ENCODE measurements at regions of chr1 and their contacts with region 1.

Region 1: GRCh38 chr1:201792534-201793305 is 36.2 kb upstream of the IPO9 start:
- DNase-seq: peak; percentile 86
- H3K4me3 ChIP-seq: no peak overlapping the region
- H3K27ac ChIP-seq: peak overlapping the region; percentile 76
- H3K4me1 ChIP-seq: peaks cover 51% of the 10 kb centered on the region
- H3K27me3 ChIP-seq: no peaks in the 10 kb centered on the region
- CTCF ChIP-seq: peak; percentile 90 to 97
- POLR2A ChIP-seq: peak; percentile 54

Region 2: GRCh38 chr1:201530741-201531531 is 261.8 kb before region 1 on chr1:
- CTCF ChIA-PET with region 1: interaction called, 27 read pairs
- POLR2A ChIA-PET with region 1: no interaction called
- dilution Hi-C with region 1: no loop called
- intact Hi-C with region 1: loop called (anchors 1 kb)
- DNase-seq: peak; percentile 77
- H3K4me3 ChIP-seq: no peak overlapping the region
- H3K27ac ChIP-seq: no peak overlapping the region
- H3K4me1 ChIP-seq: peaks cover 12% of the 10 kb centered on the region
- H3K27me3 ChIP-seq: no peaks in the 10 kb centered on the region
- CTCF ChIP-seq: peak; percentile 87 to 89
- POLR2A ChIP-seq: no peak

Region 3: DNA sequence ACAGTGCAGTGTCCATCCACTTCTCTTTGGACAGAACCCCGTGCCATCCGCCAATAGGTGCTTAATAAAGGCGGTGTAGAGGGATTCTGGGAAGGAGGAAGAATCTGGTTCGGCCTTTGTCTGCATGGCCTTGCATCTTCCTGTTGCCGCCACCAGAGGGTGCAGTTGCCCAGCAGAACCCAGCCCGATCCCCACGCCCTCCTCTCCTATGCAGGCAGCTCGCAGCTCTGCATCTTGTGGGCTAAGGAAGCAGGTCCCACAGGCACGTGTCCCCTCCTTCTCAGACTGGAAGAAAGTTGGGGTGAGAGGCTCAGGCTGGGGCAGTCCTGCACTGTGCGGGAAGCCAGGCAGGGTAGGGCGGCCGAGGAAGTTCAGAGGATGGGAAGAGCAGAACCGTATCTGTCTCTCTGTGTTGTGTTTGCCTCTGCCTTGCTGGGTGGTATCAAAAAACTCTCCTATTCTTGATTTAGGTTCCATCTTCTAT is 233.0 kb before region 1 on chr1:
- CTCF ChIA-PET with region 1: interaction called, 91 read pairs
- POLR2A ChIA-PET with region 1: no interaction called
- dilution Hi-C with region 1: no loop called
- intact Hi-C with region 1: loop called (anchors 1 kb)
- DNase-seq: peak; percentile 82
- H3K4me3 ChIP-seq: no peak overlapping the region
- H3K27ac ChIP-seq: no peak overlapping the region
- H3K4me1 ChIP-seq: peaks cover 50% of the 10 kb centered on the region
- H3K27me3 ChIP-seq: no peaks in the 10 kb centered on the region
- CTCF ChIP-seq: peak; percentile 94 to 97
- POLR2A ChIP-seq: no peak

Region 4: DNA sequence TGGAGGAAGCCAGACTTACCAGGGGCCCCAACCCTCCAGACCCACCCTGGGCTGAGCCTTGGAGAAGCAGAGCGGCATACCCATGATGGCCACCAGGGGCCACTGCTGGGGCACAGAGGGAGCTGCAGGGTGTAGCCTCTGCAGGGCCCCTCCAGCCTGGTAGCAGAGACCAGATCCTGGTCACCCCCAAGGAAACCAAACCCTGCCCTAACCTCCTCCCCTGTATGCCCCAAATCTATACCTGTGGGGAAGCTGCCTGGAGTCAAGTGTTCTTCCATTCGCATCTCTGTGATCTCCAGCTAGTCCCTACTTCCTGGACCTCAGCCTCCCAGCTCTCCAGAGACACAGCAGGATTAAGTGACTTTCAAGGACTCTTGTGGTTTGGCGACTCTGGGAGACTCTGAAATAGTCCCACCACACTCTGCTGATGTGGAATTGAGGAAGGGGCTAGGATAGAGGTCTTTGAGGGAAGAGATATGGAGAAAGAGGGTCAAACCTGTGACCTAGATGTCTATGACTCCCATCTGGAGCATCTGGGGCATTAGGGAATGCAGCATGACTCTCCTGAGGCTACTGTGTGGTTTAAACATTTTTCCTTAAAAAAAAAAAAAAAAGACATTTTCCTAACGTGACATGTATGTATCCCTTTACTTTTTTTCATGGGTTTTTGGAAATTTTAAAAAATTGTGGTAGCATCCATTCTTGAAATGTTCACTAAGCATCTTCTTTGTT is 83.0 kb before region 1 on chr1:
- CTCF ChIA-PET with region 1: interaction called, 970 read pairs
- POLR2A ChIA-PET with region 1: interaction called, 5 read pairs
- dilution Hi-C with region 1: no loop called
- intact Hi-C with region 1: loop called (anchors 1 kb)
- DNase-seq: peak; percentile 67
- H3K4me3 ChIP-seq: no peak overlapping the region
- H3K27ac ChIP-seq: peak overlapping the region; percentile 0
- H3K4me1 ChIP-seq: peaks cover 36% of the 10 kb centered on the region
- H3K27me3 ChIP-seq: no peaks in the 10 kb centered on the region
- CTCF ChIP-seq: peak; percentile 80 to 97
- POLR2A ChIP-seq: no peak

Region 5: DNA sequence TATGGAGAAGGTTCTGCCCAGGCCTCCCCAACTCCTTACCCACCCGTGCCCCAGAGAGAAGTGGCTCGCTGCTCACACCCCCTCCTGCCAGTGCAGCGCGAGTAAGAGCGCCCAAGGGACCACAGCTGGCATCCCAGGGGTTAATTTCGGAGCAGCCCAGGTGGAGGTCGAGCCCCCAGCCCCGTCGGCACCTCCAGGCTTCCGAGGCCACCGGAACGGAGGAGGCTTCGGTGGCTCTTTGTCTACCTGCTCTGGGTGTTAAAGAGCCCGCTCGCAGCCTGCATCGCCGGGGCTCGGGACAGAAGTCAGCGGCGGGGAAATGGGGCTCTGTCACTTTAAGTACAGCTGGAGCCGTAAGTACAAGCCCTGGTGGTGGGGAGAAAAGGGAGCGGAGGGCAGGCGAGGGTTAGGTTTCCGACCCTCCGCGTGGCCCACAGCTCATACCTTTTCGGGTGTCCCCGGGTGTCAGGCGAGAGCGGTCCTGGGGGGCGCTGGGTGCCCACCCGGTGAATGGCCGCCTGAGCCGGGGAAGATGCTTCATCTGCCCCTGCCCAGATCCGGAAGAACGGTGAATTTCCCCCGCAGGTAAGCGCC is 53.1 kb before region 1 on chr1:
- CTCF ChIA-PET with region 1: interaction called, 29 read pairs
- POLR2A ChIA-PET with region 1: interaction called, 3 read pairs
- dilution Hi-C with region 1: no loop called
- intact Hi-C with region 1: loop called (anchors 1 kb)
- DNase-seq: peak; percentile 61
- H3K4me3 ChIP-seq: peak overlapping the region; percentile 69 to 92 (median 91)
- H3K27ac ChIP-seq: peak overlapping the region; percentile 44
- H3K4me1 ChIP-seq: peaks cover 27% of the 10 kb centered on the region
- H3K27me3 ChIP-seq: no peaks in the 10 kb centered on the region
- CTCF ChIP-seq: peak in 1 of 2 donors; percentile 13
- POLR2A ChIP-seq: no peak

Region 6: DNA sequence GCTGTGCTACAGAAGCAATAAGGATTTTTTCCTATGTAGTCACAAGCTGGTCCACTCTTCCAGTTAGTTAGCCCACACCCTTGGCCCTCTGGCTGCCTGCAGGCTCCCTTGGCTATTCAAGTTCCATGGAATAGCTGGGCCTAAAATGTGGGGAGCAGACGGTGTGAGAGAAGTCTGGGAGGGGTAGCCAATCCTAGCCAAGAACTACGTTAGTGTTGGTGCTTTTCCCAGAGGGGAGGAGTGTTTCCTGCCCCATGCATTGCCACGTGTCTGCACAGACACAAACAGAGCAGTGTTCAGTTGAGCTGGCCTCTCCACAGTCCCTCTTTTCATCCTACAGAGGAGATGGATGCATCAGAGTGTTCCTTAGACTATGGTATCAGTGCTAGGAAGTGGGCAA is 22.8 kb before region 1 on chr1:
- CTCF ChIA-PET with region 1: interaction called, 12 read pairs
- POLR2A ChIA-PET with region 1: interaction called, 5 read pairs
- dilution Hi-C with region 1: no loop called
- intact Hi-C with region 1: loop called (anchors 2 kb)
- DNase-seq: peak; percentile 70
- H3K4me3 ChIP-seq: no peak overlapping the region
- H3K27ac ChIP-seq: no peak overlapping the region
- H3K4me1 ChIP-seq: peaks cover 41% of the 10 kb centered on the region
- H3K27me3 ChIP-seq: no peaks in the 10 kb centered on the region
- CTCF ChIP-seq: no peak
- POLR2A ChIP-seq: no peak

Measured in endothelial cell of umbilical vein (primary cell).